Adrenal gland (tissue), 19 donors: ENCODE measurements at regions of chr17 and their contacts with region 1.

Region 1: GRCh38 chr17:55527540-55528118 is 16.4 kb upstream of the SMIM36 start:
- DNase-seq: peak in 6 of 7 donors; percentile 18 to 67 (median 28)
- H3K4me3 ChIP-seq: no peak overlapping the region
- H3K27ac ChIP-seq: no peak overlapping the region
- H3K4me1 ChIP-seq: no peaks in the 10 kb centered on the region
- H3K27me3 ChIP-seq: no peaks in the 10 kb centered on the region
- CTCF ChIP-seq: peak in 5 of 6 experiments; percentile 24 to 56 (median 46)
- POLR2A ChIP-seq: no peak

Region 2: GRCh38 chr17:55576996-55577586 is 49.5 kb after region 1 on chr17:
- intact Hi-C with region 1: no loop called
- DNase-seq: peak in 6 of 7 donors; percentile 24 to 60 (median 32)
- H3K4me3 ChIP-seq: peak overlapping the region in 1 of 4 donors; percentile 21
- H3K27ac ChIP-seq: peak overlapping the region; percentile 35 to 83 (median 68)
- H3K4me1 ChIP-seq: peaks cover 0 to 10% of the 10 kb centered on the region in 2 donors
- H3K27me3 ChIP-seq: no peaks in the 10 kb centered on the region
- CTCF ChIP-seq: no peak
- POLR2A ChIP-seq: no peak

Region 3: DNA sequence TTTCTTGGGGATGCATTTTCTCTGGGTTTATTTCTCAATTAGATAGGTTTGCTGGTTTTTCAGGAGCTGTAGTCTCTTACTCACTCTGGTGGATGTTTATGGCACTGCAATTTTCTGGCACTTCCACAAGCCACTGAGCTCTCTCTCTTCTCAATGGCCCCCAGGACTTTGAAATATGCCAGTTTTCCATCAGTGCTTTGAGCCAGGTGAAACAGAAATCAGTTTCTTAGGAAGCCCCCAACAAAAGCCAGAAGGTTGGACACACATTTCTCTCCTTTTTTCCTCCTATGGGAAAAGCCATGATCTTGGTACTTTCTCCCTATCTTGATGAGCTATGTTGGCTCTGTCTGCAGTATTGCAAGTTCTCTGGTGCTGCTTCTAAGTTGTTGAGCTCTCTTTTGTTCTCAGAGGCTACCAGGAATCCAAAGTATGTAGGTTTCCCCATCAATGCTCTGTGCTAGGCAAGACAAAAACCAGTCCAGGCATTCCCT is 74.3 kb after region 1 on chr17:
- intact Hi-C with region 1: loop called (anchors 5 to 10 kb)
- DNase-seq: peak in 4 of 7 donors; percentile 26 to 52 (median 44)
- H3K4me3 ChIP-seq: no peak overlapping the region
- H3K27ac ChIP-seq: no peak overlapping the region
- H3K4me1 ChIP-seq: no peaks in the 10 kb centered on the region
- H3K27me3 ChIP-seq: no peaks in the 10 kb centered on the region
- CTCF ChIP-seq: peak; percentile 56 to 86 (median 72)
- POLR2A ChIP-seq: no peak

Region 4: DNA sequence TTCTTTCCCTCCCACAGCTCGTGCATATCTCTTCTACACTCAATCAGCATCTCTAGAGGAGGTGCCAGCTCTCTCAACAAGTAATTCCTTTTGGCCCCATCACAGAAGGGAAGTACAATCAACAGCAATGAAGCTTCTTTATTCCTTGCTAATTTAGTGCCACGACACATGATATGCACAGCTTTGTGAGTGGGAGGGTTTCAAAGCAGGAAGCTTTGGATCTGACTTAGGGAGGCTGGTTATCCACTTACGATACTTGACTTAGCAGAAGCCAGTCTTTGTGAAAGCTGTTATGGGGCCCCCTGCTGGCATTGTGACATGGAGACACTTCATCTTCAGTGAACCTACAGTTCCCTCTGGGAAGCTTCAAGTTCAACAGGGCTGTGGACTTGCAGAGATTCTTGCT is 114.0 kb after region 1 on chr17:
- intact Hi-C with region 1: loop called in 1 of 2 experiments (anchors 5 kb)
- DNase-seq: peak; percentile 48 to 88 (median 74)
- H3K4me3 ChIP-seq: no peak overlapping the region
- H3K27ac ChIP-seq: no peak overlapping the region
- H3K4me1 ChIP-seq: peaks cover 0 to 4% of the 10 kb centered on the region in 2 donors
- H3K27me3 ChIP-seq: no peaks in the 10 kb centered on the region
- CTCF ChIP-seq: peak; percentile 40 to 64 (median 52)
- POLR2A ChIP-seq: no peak

Region 5: DNA sequence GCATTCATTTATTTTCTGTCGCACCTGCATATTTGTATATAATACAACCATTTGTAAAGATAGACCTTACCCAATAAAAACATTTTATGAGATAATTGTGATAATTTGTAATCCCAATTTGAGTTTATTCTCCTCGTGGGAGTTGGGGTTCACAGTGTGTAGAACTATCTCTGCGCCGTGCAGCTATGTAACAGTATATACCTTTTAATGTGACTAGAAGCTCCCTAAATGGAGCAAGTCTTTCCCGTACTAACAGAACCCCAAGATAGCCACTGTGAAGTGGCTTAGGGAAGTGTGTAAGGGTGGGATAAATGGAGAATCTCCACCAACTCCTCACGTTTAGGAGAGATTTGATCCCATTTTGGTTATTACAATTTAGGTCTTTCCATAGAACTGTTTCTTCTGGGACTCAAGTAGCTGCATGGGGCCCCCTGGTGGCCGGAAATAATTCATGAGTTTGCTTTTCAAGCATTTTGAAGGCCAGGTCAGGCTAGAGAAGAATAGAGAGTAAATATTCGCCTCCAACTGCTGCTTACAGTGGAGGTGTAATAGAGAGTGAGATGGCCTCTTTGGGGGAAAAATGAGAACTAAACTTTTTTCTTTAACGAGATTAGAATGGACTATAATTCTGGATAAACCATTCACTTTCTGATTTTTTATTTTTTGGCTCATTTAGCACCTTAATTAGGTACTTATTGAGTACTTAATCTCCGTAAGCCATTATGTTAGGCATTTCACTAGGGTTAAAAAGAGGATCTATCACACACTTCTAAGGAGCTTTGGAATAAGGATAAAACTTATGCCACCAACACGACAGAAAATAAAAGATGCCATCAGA is 190.5 kb after region 1 on chr17:
- intact Hi-C with region 1: loop called (anchors 5 to 10 kb)
- DNase-seq: peak; percentile 81 to 97 (median 90)
- H3K4me3 ChIP-seq: no peak overlapping the region
- H3K27ac ChIP-seq: no peak overlapping the region
- H3K4me1 ChIP-seq: no peaks in the 10 kb centered on the region
- H3K27me3 ChIP-seq: no peaks in the 10 kb centered on the region
- CTCF ChIP-seq: peak; percentile 68 to 93 (median 79)
- POLR2A ChIP-seq: no peak

Region 6: DNA sequence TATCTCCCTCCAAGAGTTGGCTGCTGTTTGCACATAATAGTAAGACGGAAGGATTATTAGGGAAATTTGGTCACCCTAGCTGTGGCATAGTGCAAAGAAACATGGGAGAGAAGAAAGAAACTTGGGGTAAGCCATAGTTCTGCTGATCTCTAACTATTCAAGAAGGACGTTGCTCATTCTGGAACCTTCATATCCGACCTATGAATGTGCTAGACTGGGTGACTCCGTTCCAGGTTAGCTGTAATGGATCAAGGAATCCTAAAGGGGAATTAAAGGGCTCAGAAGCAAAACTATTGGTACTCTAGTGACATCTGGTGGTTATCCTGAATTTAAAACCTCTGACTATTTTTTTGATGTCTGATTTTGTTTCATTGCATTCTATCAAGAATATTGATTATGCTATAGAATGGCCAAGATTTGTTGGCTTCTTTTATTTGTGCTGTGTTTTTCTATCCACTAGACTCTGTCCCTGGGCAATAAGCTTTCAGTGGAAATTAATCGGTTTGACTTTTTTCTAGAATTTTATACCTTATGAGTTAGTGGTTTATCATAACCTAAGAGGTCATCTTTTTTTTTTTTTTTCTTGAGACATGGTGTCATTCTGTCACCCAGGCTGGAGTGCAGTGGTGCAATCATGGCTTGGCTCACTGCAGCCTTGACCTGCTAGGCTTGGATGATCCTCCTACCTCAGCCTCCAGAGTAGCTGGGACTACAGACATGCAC is 242.7 kb after region 1 on chr17:
- intact Hi-C with region 1: loop called (anchors 5 to 10 kb)
- DNase-seq: no peak
- H3K4me3 ChIP-seq: no peak overlapping the region
- H3K27ac ChIP-seq: peak overlapping the region in 2 of 5 donors; percentile 28 to 58
- H3K4me1 ChIP-seq: peaks cover 0 to 12% of the 10 kb centered on the region in 2 donors
- H3K27me3 ChIP-seq: no peaks in the 10 kb centered on the region
- CTCF ChIP-seq: peak; percentile 62 to 83 (median 68)
- POLR2A ChIP-seq: no peak